Naive thymus-derived CD4-positive, alpha-beta T cell (primary cell): ENCODE measurements at regions of chr7 and their contacts with region 1.

Region 1: DNA sequence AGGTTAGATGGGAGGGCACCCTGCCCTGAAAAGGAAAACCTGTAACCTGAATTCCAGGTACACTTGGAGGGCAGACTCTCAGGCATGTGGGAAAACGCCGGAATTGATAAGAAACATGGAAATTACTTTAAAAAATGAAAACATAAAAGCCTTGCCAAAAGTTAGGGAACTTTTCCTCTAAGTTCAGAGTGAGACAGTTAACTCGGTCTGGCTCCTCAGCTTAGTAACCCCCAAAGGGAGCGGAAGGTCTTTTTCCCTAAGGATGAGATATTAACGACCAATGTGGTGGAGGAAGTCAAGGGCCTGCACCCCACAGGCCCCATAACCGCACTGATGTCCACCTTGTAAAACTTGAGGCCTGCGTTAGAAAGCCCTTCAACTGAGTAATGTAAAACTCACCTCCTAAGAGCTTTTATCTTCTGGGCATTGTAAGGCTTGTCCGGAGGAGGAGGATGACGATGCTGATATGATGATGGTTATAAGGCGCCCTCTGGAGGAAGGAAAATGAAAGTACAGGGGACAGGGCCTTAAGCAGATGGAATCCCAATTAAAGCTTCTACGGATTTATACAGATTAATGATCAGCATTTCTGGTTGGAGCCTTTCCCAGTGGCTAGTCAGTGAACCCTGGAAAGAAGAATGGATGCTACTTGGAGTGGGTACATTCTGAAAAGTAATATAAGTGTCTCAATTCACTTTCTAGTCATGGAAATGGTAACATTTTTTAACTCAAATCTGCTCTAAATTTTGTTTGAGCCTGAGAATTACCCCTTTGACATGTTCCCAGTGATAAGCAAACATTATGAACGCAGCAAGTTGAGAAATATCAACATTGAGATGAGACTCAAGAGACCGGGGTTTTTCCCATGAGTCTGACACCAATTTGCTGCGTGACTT is 694 bp downstream of the COL1A2 start:
- DNase-seq: peak in 3 of 9 donors; percentile 28 to 57 (median 29)
- ATAC-seq: peak; percentile 63
- H3K4me3 ChIP-seq: no peak overlapping the region
- H3K4me3 Mint-ChIP-seq: peak overlapping the region; percentile 17 to 95 (median 70)
- H3K27ac ChIP-seq: no peak overlapping the region
- H3K27ac Mint-ChIP-seq: peak overlapping the region in 3 of 9 donors; percentile 42 to 91 (median 68)
- H3K4me1 ChIP-seq: no peaks in the 10 kb centered on the region
- H3K4me1 Mint-ChIP-seq: peaks cover 6 to 39% (median 13%) of the 10 kb centered on the region in 7 donors
- H3K27me3 ChIP-seq: peaks cover 0 to 9% of the 10 kb centered on the region in 2 donors
- H3K27me3 Mint-ChIP-seq: peaks cover 0 to 70% (median 53%) of the 10 kb centered on the region in 5 donors

Region 2: DNA sequence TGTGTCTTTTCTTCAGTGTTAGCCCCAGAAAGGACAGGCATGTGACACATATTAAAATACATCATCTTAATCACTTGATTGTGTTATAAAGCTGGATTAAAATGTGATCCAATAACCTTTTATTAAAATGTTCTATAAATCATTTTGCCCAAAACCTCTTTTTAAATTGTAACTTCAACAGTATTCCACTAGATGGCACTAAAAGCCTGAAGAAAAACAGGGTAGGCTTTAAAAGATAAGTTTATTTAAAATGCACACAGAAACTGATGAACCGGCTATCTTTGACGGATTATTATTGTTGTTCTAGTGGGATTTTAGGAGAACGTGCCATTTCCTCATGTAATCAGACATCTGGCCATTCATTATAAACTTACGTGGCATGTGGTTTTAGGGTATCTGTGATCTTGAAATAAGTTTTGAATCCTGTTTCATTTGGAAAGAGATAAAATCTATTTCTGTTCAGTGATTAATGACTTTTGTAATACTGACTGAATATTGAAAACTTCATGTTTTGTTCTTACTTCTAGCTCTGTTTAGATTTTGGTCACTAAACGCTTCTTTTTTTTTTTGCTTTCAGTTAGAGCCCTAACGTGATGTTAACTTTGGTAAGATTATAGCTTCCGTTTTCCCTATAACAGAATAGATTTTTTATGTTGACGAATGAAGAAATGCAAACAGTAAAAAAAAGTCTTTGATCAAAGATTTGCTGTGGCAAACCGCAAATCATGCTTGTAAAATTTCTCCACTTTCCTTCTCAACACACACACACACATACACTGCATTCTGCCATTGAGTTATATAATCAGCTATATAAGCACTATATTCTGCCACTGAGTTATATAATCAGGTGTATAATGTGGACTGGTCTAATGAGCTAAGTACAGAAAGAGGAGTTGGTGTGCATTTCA is 1149.6 kb before region 1 on chr7:
- CTCF ChIA-PET with region 1: no interaction called
- POLR2A ChIA-PET with region 1: no interaction called
- intact Hi-C with region 1: loop called in 1 of 2 experiments (anchors 5 kb)
- DNase-seq: peak in 5 of 9 donors; percentile 30 to 44 (median 33)
- ATAC-seq: peak; percentile 75
- H3K4me3 ChIP-seq: no peak overlapping the region
- H3K4me3 Mint-ChIP-seq: peak overlapping the region in 7 of 10 donors; percentile 10 to 55 (median 38)
- H3K27ac ChIP-seq: no peak overlapping the region
- H3K27ac Mint-ChIP-seq: peak overlapping the region in 2 of 9 donors; percentile 10 to 51
- H3K4me1 ChIP-seq: no peaks in the 10 kb centered on the region
- H3K4me1 Mint-ChIP-seq: peaks cover 0 to 39% (median 19%) of the 10 kb centered on the region in 7 donors
- H3K27me3 ChIP-seq: no peaks in the 10 kb centered on the region
- H3K27me3 Mint-ChIP-seq: no peaks in the 10 kb centered on the region

Region 3: GRCh38 chr7:93715234-93715633 is 680.2 kb before region 1 on chr7:
- CTCF ChIA-PET with region 1: no interaction called
- POLR2A ChIA-PET with region 1: no interaction called
- intact Hi-C with region 1: loop called in 1 of 2 experiments (anchors 1 kb)
- DNase-seq: peak in 1 of 9 donors; percentile 21
- ATAC-seq: no peak
- H3K4me3 ChIP-seq: no peak overlapping the region
- H3K4me3 Mint-ChIP-seq: no peak overlapping the region
- H3K27ac ChIP-seq: no peak overlapping the region
- H3K27ac Mint-ChIP-seq: no peak overlapping the region
- H3K4me1 ChIP-seq: no peaks in the 10 kb centered on the region
- H3K4me1 Mint-ChIP-seq: peaks cover 0 to 1% (median 0%) of the 10 kb centered on the region in 7 donors
- H3K27me3 ChIP-seq: no peaks in the 10 kb centered on the region
- H3K27me3 Mint-ChIP-seq: peaks cover 0 to 19% (median 9%) of the 10 kb centered on the region in 5 donors

Region 4: DNA sequence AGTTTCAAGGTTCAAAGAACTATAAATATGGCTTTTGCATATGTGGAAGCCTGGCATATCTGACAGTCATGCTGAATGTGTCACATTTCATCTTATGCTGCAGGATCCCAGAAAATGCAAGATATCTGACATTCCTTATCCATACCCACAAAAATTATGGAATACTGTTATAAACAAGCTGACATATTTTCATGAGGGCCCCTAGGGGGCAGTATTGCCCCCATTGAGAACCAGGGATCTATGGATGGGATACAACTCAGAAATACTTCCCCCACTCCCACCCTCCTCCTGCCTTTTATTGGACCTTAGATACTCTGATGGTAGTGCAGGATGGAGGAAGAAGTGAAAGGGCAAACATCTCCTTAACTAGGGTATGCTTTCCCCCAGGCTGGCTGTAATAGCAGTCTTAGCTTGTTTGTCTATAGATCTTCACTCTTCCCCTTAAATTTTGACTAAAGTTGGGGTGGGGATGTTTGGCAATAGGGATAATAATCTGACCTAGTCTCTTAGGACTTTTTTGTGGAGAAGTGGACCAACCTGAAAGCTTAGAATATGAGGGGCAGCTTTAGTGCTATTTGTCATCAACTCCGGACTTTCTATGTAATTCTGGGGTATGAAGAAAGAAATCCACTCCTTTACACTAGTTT is 492.5 kb before region 1 on chr7:
- CTCF ChIA-PET with region 1: no interaction called
- POLR2A ChIA-PET with region 1: no interaction called
- intact Hi-C with region 1: loop called in 1 of 2 experiments (anchors 1 kb)
- DNase-seq: no peak
- ATAC-seq: peak; percentile 36
- H3K4me3 ChIP-seq: no peak overlapping the region
- H3K4me3 Mint-ChIP-seq: no peak overlapping the region
- H3K27ac ChIP-seq: no peak overlapping the region
- H3K27ac Mint-ChIP-seq: no peak overlapping the region
- H3K4me1 ChIP-seq: no peaks in the 10 kb centered on the region
- H3K4me1 Mint-ChIP-seq: no peaks in the 10 kb centered on the region
- H3K27me3 ChIP-seq: no peaks in the 10 kb centered on the region
- H3K27me3 Mint-ChIP-seq: peaks cover 7 to 35% (median 13%) of the 10 kb centered on the region in 5 donors

Region 5: DNA sequence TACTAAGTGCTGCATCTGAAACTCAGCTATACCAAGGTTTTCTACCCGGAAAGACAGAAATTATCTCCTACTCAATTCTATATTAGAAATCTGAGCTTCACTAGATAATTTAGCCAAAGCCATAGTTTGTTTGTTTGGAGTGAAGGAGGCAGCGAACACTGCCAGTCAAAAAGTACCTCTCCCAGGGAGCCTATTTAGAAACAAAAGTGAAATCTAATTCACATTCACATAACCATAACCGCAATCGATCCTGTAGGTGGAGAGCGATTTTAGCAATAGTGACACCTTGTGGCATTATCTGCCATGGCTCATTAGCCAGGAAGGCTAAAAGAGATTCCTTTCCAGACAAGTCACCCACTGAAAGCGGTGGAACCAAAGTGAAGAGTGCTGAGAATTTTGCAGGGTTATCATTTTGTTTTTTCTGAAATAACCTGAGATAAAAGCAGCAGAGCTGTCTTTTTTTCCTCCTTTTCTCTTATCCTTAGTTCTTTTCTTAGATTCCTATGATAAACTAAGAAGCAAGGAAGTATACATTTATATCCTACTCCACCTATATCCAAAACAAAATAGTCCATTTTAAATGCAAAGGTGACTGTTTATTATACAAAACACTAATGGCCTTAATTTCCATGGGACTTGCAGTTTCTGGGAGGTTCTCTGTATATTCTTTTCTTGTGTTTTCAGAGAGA is 307.6 kb before region 1 on chr7:
- CTCF ChIA-PET with region 1: no interaction called
- POLR2A ChIA-PET with region 1: no interaction called
- intact Hi-C with region 1: loop called in 1 of 2 experiments (anchors 1 kb)
- DNase-seq: peak in 8 of 9 donors; percentile 27 to 62 (median 46)
- ATAC-seq: peak; percentile 88
- H3K4me3 ChIP-seq: peak overlapping the region; percentile 43
- H3K4me3 Mint-ChIP-seq: peak overlapping the region; percentile 58 to 81 (median 74)
- H3K27ac ChIP-seq: no peak overlapping the region
- H3K27ac Mint-ChIP-seq: peak overlapping the region in 3 of 9 donors; percentile 8 to 70 (median 22)
- H3K4me1 ChIP-seq: no peaks in the 10 kb centered on the region
- H3K4me1 Mint-ChIP-seq: peaks cover 4 to 7% (median 5%) of the 10 kb centered on the region in 7 donors
- H3K27me3 ChIP-seq: no peaks in the 10 kb centered on the region
- H3K27me3 Mint-ChIP-seq: peaks cover 18 to 55% (median 38%) of the 10 kb centered on the region in 5 donors

Region 6: DNA sequence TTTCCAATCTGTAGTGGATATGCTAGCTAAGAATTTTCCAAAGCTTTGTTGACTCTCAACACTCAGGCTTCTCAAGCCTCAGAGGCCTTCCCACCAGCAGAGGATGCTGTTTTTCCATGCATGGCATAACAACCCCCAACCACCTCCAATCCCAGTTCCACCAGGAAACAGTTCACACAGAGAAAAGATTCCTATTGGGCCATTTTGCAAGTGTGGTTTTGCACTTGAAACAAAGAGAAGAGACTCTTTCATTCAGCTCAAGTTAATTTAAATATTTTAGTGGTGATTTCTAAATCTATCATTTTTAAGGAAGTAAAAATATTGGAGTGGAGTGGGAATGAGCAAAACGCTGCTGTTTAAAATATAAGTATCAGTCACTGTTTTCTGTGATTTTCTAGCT is 106.3 kb before region 1 on chr7:
- CTCF ChIA-PET with region 1: no interaction called
- POLR2A ChIA-PET with region 1: no interaction called
- intact Hi-C with region 1: loop called in 1 of 2 experiments (anchors 1 kb)
- DNase-seq: no peak
- ATAC-seq: no peak
- H3K4me3 ChIP-seq: no peak overlapping the region
- H3K4me3 Mint-ChIP-seq: no peak overlapping the region
- H3K27ac ChIP-seq: no peak overlapping the region
- H3K27ac Mint-ChIP-seq: no peak overlapping the region
- H3K4me1 ChIP-seq: no peaks in the 10 kb centered on the region
- H3K4me1 Mint-ChIP-seq: no peaks in the 10 kb centered on the region
- H3K27me3 ChIP-seq: no peaks in the 10 kb centered on the region
- H3K27me3 Mint-ChIP-seq: peaks cover 8 to 14% (median 11%) of the 10 kb centered on the region in 5 donors

Region 7: DNA sequence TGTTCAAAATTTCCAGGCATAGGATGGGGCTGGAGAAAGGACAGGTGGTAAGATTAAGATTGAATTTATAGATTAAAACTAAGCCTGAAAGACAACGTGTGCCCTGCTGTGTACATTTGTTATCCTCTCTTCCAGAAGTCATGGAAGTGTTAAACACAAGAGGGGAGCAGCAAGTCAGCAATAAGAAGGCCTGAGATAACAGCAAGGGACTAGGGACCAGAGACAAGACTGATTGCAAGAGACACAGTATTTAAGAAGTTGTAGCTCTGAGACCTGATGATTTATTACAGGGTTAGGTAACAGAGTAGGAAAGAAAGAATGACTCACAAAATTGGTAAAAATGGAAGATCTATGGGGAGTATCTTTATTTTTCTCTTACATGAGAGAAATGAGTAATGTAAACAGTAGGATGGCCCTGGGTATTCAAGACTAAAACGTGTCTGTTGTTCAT is 56.4 kb before region 1 on chr7:
- CTCF ChIA-PET with region 1: no interaction called
- POLR2A ChIA-PET with region 1: no interaction called
- intact Hi-C with region 1: no loop called
- DNase-seq: no peak
- ATAC-seq: no peak
- H3K4me3 ChIP-seq: no peak overlapping the region
- H3K4me3 Mint-ChIP-seq: no peak overlapping the region
- H3K27ac ChIP-seq: no peak overlapping the region
- H3K27ac Mint-ChIP-seq: no peak overlapping the region
- H3K4me1 ChIP-seq: no peaks in the 10 kb centered on the region
- H3K4me1 Mint-ChIP-seq: peaks cover 0 to 5% (median 4%) of the 10 kb centered on the region in 7 donors
- H3K27me3 ChIP-seq: no peaks in the 10 kb centered on the region
- H3K27me3 Mint-ChIP-seq: peaks cover 0 to 14% (median 3%) of the 10 kb centered on the region in 5 donors

Region 8: GRCh38 chr7:94657771-94658693 is 262.6 kb after region 1 on chr7:
- CTCF ChIA-PET with region 1: no interaction called
- POLR2A ChIA-PET with region 1: no interaction called
- intact Hi-C with region 1: loop called in 1 of 2 experiments (anchors 2 kb)
- DNase-seq: peak; percentile 83 to 97 (median 95)
- ATAC-seq: peak; percentile 88
- H3K4me3 ChIP-seq: peak overlapping the region; percentile 85
- H3K4me3 Mint-ChIP-seq: peak overlapping the region; percentile 83 to 91 (median 88)
- H3K27ac ChIP-seq: no peak overlapping the region
- H3K27ac Mint-ChIP-seq: peak overlapping the region in 6 of 9 donors; percentile 17 to 84 (median 54)
- H3K4me1 ChIP-seq: peaks cover 15 to 16% of the 10 kb centered on the region in 2 donors
- H3K4me1 Mint-ChIP-seq: peaks cover 8 to 24% (median 17%) of the 10 kb centered on the region in 7 donors
- H3K27me3 ChIP-seq: peaks cover 14 to 21% of the 10 kb centered on the region in 2 donors
- H3K27me3 Mint-ChIP-seq: peaks cover 11 to 28% (median 23%) of the 10 kb centered on the region in 5 donors